Dorsolateral prefrontal cortex (tissue), 120 donors: ENCODE measurements at regions of chr20 and their contacts with region 1.

Region 1: DNA sequence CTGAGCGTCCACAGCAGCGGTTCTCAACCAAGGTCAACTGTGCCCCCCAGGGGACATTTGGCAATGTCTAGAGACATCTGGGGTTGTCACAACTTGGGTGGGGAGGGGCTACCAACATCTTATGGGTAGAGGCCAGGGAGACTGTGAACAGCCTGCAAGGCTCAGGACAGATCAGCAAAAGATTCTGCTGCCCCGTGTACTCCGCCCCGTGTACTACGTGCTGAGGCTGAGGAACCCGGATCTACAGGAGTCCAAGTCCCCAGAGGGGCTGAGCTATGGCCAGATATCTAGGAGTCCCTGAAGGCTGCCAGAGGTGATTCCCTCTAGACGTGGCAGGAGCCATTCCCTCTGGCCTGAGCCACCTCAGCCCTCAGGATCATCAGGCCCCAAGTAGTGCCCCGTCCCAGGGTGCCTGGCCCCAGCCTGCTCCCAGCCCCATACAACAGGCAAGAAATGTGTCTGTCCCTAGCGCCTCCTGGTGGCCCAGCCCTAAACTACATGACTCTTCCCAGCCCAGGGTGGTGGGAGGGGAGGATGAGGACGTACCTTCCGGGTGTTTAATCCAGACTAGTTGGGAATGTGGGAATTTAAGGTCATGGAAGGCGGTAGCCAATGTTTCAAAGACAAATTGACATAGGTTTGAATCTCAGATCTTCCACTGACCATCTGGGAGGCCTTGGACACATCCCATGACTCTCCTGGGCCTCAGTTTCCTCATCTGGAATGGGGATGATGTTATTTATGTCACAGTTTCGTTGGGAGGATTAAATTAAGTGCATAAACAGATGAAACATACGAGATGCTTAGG is 49.5 kb upstream of the PTPN1 start:
- DNase-seq: peak; percentile 25 to 87 (median 78)
- H3K4me3 ChIP-seq: no peak overlapping the region
- H3K27ac ChIP-seq: peak overlapping the region in 5 of 59 donors; percentile 9 to 53 (median 21)
- H3K27me3 ChIP-seq: no peaks in the 10 kb centered on the region
- CTCF ChIP-seq: peak; percentile 72 to 94 (median 88)

Region 2: DNA sequence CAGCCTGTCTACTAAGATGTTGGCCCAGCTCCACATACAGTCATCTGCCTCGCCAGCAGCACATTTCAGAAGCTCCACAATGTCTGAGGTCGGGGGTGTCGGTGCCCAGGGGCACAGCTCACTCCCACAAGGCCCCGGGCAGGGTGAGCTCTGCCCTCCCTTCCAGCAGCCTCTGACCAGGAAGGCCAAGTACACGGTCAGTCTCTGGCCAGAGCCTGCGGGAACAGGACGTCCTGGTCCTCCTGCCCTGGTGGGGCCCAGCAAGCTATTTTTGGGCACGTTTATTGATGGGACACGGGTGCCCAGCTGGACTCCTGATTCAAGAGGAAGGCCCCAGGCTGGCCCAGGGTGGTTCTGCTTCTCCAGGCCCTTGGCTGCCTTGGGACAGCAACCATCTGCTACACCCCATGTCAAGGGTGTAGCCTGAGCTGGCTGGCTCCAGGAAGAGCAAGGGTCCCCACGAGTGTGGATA is 65.4 kb before region 1 on chr20:
- intact Hi-C with region 1: loop called in 1 of 2 experiments (anchors 5 kb)
- DNase-seq: peak in 1 of 10 donors; percentile 52
- H3K4me3 ChIP-seq: no peak overlapping the region
- H3K27ac ChIP-seq: peak overlapping the region in 37 of 59 donors; percentile 6 to 82 (median 46)
- H3K27me3 ChIP-seq: no peaks in the 10 kb centered on the region
- CTCF ChIP-seq: no peak